Right ventricle myocardium inferior (tissue), 1 donor: ENCODE measurements at regions of chr6 and their contacts with region 1.

Region 1: GRCh38 chr6:113732384-113732966 is 124.7 kb upstream of the MARCKS start:
- DNase-seq: no peak
- ATAC-seq: peak; percentile 97

Region 2: DNA sequence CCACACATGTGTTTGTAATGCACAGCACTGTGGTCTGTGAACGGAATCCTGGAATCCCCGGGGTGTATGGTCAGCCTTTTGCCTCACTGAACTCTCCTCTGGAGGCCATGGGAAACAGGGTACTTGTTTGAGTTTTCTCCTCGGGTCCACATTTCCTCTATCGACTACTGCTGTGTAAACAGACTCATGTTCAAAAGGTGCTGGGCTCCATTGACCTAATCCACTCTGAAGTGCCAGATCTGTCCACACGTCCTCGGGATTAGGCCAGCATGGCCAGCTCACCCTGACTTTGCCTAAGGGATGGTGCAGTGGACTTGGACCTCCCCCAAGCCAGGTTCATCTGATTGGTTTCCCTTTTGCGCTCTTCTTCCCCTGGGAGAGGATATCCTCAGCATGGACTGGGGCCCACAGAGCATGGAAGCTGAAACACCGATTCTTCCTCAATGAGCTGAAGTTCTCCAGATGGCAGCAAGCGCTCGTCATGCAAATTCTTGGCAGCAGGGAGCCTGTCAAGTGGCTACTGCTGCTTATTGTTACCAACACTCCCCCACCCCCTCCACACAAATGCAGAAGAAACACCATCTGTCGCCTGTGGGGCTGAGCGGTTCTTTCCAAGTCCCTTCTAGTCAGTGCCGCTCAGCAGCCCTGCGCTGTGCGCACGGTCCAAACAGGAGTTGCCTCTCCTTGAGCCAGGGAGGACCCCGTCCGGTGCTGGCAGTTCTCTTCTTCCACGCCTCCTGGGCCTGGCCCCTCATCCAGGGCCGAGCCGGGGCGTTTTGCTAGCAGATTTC is 167.9 kb before region 1 on chr6:
- intact Hi-C with region 1: loop called (anchors 2 kb)
- DNase-seq: peak; percentile 90
- ATAC-seq: peak; percentile 99